ENCODE measurements at regions of chr19 and their contacts with region 1.

Region 1: DNA sequence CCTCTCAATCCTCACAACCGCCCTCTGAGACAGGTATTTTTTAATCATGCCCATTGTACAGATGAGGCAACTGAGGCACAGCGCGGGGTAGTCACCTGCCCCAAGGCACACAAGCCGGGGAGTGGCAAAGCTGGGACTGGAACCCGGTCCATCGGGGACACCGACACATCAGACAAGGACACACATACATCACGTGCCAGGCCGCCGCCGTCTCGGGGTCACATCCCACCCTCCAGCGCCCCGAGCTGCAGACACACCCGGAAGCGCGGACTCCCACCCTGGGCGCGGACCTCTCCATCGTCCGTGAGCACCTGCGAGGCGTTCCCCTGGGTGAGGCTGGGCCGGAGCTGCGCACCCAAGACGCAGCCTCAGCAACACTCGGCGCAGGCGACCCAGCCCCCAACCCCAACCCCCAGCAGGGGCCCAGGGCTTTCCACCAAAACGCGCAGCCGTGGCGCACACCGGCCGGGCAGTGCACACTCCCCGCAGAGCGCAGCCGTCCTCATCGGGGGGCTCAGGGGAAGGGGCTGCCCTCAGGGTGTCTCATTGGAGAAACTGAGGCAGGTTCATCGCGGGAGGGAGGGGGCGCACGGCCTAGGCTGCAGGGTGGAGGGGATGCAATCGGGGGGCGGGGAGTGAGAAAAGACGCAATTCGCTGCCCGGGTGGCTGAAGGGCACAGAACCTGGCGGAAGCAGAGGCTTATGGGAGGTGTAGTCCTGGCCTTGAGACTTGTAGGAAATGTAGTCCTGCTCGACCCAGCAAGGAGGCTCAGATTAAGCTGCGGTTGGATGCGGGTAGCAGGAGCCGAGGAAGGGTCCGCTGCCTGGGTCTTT is 1.9 kb upstream of the LMTK3 start:
- DNase-seq: peak; percentile 62
- H3K4me3 ChIP-seq: peak overlapping the region; percentile 57 to 70 (median 64)
- H3K27ac ChIP-seq: no peak overlapping the region
- H3K4me1 ChIP-seq: peaks cover 5% of the 10 kb centered on the region
- H3K27me3 ChIP-seq: no peaks in the 10 kb centered on the region
- CTCF ChIP-seq: no peak

Region 2: DNA sequence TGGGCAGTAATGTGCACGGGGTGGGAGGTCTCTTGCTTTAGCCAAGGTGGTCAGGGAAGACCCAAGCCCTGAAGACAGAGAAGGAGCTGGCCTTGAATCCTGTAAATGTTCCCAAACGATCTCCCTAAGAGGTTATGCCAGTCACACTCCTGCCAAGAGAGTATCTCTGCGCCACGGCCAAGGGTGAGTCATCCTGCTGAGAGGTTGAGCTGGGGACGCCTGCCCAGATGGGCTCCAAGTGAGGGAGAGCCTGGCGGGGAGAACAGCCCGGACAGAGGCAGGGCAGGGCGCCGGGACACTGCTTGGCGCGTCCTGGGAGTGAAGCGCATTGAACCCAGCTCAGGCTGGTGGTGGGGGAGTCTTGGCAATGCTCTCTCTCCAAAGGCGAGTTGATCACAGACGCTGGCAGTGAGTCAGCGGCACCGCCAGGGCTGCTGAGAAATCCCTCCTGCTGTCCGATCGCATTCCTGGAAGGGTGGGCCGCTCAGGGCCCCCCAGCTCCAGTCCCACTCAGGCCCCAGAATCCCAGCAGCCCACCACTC is 54.9 kb after region 1 on chr19:
- CTCF ChIA-PET with region 1: no interaction called
- dilution Hi-C with region 1: no loop called
- in situ Hi-C with region 1: loop called in 1 of 2 experiments (anchors 10 kb)
- intact Hi-C with region 1: no loop called
- DNase-seq: peak; percentile 85
- H3K4me3 ChIP-seq: peak overlapping the region in 2 of 3 experiments; percentile 17 to 31
- H3K27ac ChIP-seq: peak overlapping the region; percentile 40
- H3K4me1 ChIP-seq: peaks cover 10% of the 10 kb centered on the region
- H3K27me3 ChIP-seq: no peaks in the 10 kb centered on the region
- CTCF ChIP-seq: no peak

Region 3: DNA sequence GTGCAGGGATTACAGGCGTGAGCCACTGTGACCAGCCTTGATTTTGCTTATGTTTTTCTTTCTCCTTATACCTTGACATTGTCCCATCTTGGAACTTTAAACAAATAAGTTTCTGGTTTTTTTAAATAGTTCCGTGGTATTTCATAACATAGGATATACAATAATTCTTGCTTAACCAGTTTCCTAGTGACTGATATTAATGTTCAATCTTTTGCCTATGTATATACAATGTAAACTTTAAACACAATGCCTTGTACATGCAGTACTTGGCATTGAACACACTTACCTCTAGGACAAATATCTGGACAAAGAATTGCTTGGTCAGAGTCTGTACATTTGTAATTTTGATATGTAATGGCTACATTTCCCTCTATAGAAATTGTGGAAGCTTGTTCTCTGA is 68.7 kb after region 1 on chr19:
- CTCF ChIA-PET with region 1: no interaction called
- dilution Hi-C with region 1: loop called (anchors 5 kb)
- in situ Hi-C with region 1: loop called (anchors 5 kb)
- intact Hi-C with region 1: no loop called
- DNase-seq: no peak
- H3K4me3 ChIP-seq: no peak overlapping the region
- H3K27ac ChIP-seq: no peak overlapping the region
- H3K4me1 ChIP-seq: no peaks in the 10 kb centered on the region
- H3K27me3 ChIP-seq: no peaks in the 10 kb centered on the region
- CTCF ChIP-seq: no peak

Region 4: GRCh38 chr19:48608798-48609263 is 95.3 kb after region 1 on chr19:
- CTCF ChIA-PET with region 1: no interaction called
- dilution Hi-C with region 1: no loop called
- in situ Hi-C with region 1: no loop called
- intact Hi-C with region 1: no loop called
- DNase-seq: no peak
- H3K4me3 ChIP-seq: no peak overlapping the region
- H3K27ac ChIP-seq: no peak overlapping the region
- H3K4me1 ChIP-seq: peaks cover 3% of the 10 kb centered on the region
- H3K27me3 ChIP-seq: no peaks in the 10 kb centered on the region
- CTCF ChIP-seq: peak; percentile 50 to 59

Region 5: DNA sequence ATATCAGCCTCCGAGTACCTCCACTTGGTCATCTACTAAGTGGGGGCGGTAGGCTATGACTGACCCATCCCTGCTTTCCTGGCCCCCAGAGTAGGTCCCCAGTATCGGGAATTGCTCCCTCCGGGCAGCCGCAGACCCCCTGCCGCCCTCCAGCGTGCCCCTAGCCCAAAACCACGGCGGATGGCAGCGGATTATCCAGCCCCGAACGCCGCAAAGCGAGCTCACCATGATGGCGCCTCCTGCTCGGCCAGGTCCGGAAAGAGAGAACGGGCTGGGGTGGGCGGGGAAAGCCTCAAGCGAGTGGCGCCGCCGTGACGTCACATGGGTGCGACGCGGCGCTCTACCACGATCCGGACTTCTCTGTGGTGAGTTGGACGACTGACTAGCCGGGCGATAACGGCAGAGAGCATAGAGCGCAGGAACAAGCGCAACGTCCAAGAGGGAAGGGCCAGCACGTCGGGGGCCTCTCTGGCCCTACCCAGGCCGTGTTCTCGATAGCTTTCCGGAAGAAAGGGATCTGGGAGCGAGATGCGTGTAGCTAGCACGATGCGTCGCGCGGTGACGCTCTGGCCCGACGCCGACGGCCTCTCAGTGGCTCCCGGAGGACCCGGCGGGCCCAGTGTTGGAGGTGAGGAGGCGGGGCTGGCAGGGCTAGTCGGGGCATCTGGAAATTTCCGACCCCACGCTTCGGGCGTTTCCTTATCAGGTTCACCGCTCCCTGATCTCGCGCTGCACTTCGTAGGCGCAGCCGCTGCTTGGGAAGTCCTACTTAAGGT is 105.6 kb after region 1 on chr19 and contains the starts of genes RPL18 and SPHK2:
- CTCF ChIA-PET with region 1: no interaction called
- dilution Hi-C with region 1: loop called (anchors 5 kb)
- in situ Hi-C with region 1: no loop called
- intact Hi-C with region 1: no loop called
- DNase-seq: peak; percentile 100
- H3K4me3 ChIP-seq: peak within 1 kb of the TSS; percentile 92 to 94 (median 94)
- H3K27ac ChIP-seq: peak within 1 kb of the TSS; percentile 88
- H3K4me1 ChIP-seq: peaks cover 48% of the 10 kb centered on the region
- H3K27me3 ChIP-seq: no peaks in the 10 kb centered on the region
- CTCF ChIP-seq: no peak
- total RNA-seq, gene RPL18: 1,261 to 1,652 TPM
- total RNA-seq, gene SPHK2: 4.0 to 15.7 TPM